IMR-90 (cell line): ENCODE measurements at regions of chr3 and their contacts with region 1.

Region 1: DNA sequence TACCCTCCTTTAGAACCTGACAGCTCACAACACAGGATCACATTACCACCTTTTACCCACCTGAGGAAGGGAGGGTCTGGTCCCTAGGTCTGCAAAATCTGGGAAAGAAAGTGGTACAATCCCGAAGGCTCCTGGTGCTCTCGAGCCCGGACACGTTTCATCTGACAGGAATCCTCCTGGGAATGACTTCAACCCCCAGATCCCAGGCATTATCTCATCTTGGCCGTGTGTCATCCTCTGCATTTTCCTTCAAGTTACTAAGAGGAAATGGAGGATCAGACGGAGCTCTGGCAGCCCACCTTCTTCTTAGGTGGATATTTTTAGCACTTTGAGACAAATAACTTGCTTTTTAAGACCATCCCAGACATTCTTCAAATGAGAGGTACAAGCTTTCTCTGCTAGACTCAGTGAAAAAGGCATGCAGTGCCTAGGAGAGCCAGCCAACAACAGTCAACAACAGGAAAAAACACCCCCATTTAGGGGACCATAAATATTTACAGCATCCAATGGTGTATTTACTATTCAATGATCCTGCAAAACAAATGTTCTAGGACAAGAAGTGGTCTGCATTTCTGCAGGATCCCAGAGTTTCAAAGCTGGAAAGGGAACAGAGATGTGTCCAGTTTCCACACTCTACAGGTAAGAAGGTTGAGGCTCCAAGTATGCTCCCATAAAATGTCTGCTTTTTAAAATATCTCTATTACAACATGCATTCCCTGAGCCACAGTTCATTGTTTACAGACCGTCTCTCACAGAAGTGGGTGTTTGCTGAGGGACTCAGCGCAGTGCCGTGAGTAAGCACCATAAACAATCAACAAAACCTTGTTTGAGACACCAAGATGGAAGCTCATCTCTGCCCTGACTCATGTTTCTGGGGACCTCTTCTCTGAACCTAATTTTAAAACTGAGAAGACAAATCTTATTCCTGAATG is 38.3 kb upstream of the ARHGEF3 start:
- DNase-seq: peak; percentile 87
- ATAC-seq: peak; percentile 86
- H3K4me3 ChIP-seq: no peak overlapping the region
- H3K27ac ChIP-seq: no peak overlapping the region
- H3K4me1 ChIP-seq: peaks cover 4% of the 10 kb centered on the region
- H3K27me3 ChIP-seq: no peaks in the 10 kb centered on the region
- CTCF ChIP-seq: no peak
- POLR2A ChIP-seq: no peak
- RAD21 ChIP-seq: no peak

Region 2: DNA sequence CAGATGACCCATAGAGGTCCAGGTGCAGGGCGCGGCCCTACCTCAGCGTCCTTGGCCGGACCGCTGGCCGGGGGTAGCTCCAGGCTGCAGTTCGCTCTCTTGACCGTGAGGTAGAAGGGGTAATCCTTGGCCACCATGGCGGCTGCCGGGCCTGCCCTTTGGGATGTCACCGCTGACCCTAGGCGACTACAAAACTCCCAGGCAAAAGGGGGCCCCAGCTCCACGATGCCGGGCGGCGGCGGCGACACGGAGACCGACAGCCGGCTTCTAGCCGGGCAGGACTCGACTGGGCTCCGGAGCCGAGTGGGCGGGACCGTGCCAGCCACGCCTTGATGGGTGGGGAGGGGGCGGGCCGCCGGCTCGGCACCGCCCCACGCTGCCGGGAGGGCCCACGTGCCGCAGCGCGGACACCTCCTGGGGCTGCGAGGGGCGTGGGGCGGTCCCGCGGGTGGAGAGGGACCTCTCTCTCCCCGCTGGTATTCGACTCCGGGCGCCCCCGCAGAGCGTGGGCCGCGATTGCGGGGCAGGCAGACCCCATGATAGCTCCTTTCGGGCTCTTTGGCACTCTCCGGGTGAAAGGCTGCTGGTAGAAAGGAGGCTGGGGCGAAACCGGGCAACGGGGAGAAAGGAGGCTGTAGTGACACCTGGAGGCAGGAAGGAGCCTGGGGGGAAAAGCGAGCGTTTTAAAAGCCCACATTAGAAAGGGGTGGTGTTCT is 38.2 kb before region 1 on chr3 and contains the start of gene ARHGEF3:
- CTCF ChIA-PET with region 1: no interaction called
- POLR2A ChIA-PET with region 1: no interaction called
- dilution Hi-C with region 1: no loop called
- in situ Hi-C with region 1: no loop called
- intact Hi-C with region 1: loop called (anchors 2 kb)
- DNase-seq: peak; percentile 48
- ATAC-seq: peak; percentile 99
- H3K4me3 ChIP-seq: peak within 1 kb of the TSS; percentile 73
- H3K27ac ChIP-seq: no peak within 1 kb of the TSS
- H3K4me1 ChIP-seq: peaks cover 3% of the 10 kb centered on the region; the same call in 1 of the 2 replicates
- H3K27me3 ChIP-seq: peaks cover 5% of the 10 kb centered on the region; the same call in 1 of the 2 replicates
- CTCF ChIP-seq: peak; percentile 27
- POLR2A ChIP-seq: 0 out of 2 replicates have a peak, but pooled peaks have one; percentile 41
- RAD21 ChIP-seq: no peak
- total RNA-seq, gene ARHGEF3: 2.3 and 2.5 TPM in 2 replicates